OCI-LY7 (cell line): ENCODE measurements at regions of chr5 and their contacts with region 1.

Region 1: DNA sequence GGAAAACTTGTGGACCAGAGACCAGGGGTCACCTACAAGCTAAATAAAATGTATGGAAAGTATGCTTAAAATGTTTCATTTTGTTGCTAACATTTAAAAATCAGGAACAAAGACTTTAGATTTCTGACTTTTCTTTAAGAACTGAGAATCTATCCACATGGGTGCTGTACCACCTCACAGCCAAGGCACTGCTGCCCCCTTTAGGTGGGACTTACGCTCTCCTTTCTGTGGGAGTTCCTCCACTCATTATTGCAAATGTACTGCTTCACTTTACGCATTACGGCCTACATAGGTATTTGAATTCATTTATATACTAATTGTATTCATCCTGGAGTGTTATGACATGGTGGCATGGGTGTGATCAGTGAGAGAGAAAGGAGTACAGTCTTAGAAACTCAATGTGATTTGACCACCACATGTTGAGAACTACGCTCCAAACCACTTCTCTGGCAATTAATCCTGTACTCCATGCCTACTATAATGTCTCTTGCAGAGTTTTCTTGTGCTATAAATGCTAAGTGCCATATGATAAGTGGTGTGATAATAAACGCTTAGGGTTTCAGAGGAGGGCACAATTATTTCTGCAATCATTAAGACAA is 24.7 kb upstream of the CETN3 start:
- DNase-seq: peak; percentile 55
- H3K4me3 ChIP-seq: no peak overlapping the region
- H3K27ac ChIP-seq: no peak overlapping the region
- H3K4me1 ChIP-seq: no peaks in the 10 kb centered on the region
- CTCF ChIP-seq: peak; percentile 89

Region 2: GRCh38 chr5:90135779-90136378 is 298.3 kb before region 1 on chr5:
- CTCF ChIA-PET with region 1: no interaction called
- POLR2A ChIA-PET with region 1: no interaction called
- intact Hi-C with region 1: loop called (anchors 5 kb)
- DNase-seq: peak; percentile 1
- H3K4me3 ChIP-seq: no peak overlapping the region
- H3K27ac ChIP-seq: no peak overlapping the region
- H3K4me1 ChIP-seq: no peaks in the 10 kb centered on the region
- CTCF ChIP-seq: peak; percentile 45; the same call in 1 of the 2 replicates

Region 3: GRCh38 chr5:90421136-90421535 is 13.1 kb before region 1 on chr5:
- CTCF ChIA-PET with region 1: no interaction called
- POLR2A ChIA-PET with region 1: interaction called, 3 read pairs
- intact Hi-C with region 1: loop called (anchors 1 kb)
- DNase-seq: peak; percentile 19
- H3K4me3 ChIP-seq: no peak overlapping the region
- H3K27ac ChIP-seq: no peak overlapping the region
- H3K4me1 ChIP-seq: no peaks in the 10 kb centered on the region
- CTCF ChIP-seq: peak; percentile 61

Region 4: GRCh38 chr5:90606539-90606938 is 172.3 kb after region 1 on chr5:
- CTCF ChIA-PET with region 1: no interaction called
- POLR2A ChIA-PET with region 1: no interaction called
- intact Hi-C with region 1: loop called (anchors 2 kb)
- DNase-seq: no peak
- H3K4me3 ChIP-seq: no peak overlapping the region
- H3K27ac ChIP-seq: no peak overlapping the region
- H3K4me1 ChIP-seq: no peaks in the 10 kb centered on the region
- CTCF ChIP-seq: peak; percentile 56